ENCODE measurements at regions of chr16 and their contacts with region 1.

Region 1: GRCh38 chr16:31202414-31203375 is at the start of gene PYCARD:
- DNase-seq: peak; percentile 39
- H3K4me3 Mint-ChIP-seq: peak within 1 kb of the TSS; percentile 82
- H3K27ac Mint-ChIP-seq: peak within 1 kb of the TSS; percentile 77
- H3K4me1 Mint-ChIP-seq: peaks cover 46% of the 10 kb centered on the region
- H3K27me3 Mint-ChIP-seq: peaks cover 5% of the 10 kb centered on the region
- total RNA-seq, gene PYCARD: 15.1 and 15.3 TPM in 2 replicates

Region 2: GRCh38 chr16:31253642-31254045 is 50.9 kb after region 1 on chr16:
- intact Hi-C with region 1: loop called (anchors 1 kb)
- DNase-seq: peak; percentile 34
- H3K4me3 Mint-ChIP-seq: peak overlapping the region; percentile 72
- H3K27ac Mint-ChIP-seq: peak overlapping the region; percentile 93
- H3K4me1 Mint-ChIP-seq: peaks cover 42% of the 10 kb centered on the region
- H3K27me3 Mint-ChIP-seq: no peaks in the 10 kb centered on the region

Region 3: GRCh38 chr16:31265329-31266245 is 62.9 kb after region 1 on chr16:
- intact Hi-C with region 1: loop called (anchors 5 kb)
- DNase-seq: peak; percentile 40
- H3K4me3 Mint-ChIP-seq: peak overlapping the region; percentile 51
- H3K27ac Mint-ChIP-seq: peak overlapping the region; percentile 83
- H3K4me1 Mint-ChIP-seq: peaks cover 36% of the 10 kb centered on the region
- H3K27me3 Mint-ChIP-seq: no peaks in the 10 kb centered on the region

Region 4: GRCh38 chr16:31354394-31355291 is 151.9 kb after region 1 on chr16 and contains the start of gene ITGAX:
- intact Hi-C with region 1: loop called (anchors 10 kb)
- DNase-seq: peak; percentile 64
- H3K4me3 Mint-ChIP-seq: peak within 1 kb of the TSS; percentile 86
- H3K27ac Mint-ChIP-seq: peak within 1 kb of the TSS; percentile 97
- H3K4me1 Mint-ChIP-seq: peaks cover 62% of the 10 kb centered on the region
- H3K27me3 Mint-ChIP-seq: no peaks in the 10 kb centered on the region
- total RNA-seq, gene ITGAX: 56.2 and 56.9 TPM in 2 replicates

Region 5: DNA sequence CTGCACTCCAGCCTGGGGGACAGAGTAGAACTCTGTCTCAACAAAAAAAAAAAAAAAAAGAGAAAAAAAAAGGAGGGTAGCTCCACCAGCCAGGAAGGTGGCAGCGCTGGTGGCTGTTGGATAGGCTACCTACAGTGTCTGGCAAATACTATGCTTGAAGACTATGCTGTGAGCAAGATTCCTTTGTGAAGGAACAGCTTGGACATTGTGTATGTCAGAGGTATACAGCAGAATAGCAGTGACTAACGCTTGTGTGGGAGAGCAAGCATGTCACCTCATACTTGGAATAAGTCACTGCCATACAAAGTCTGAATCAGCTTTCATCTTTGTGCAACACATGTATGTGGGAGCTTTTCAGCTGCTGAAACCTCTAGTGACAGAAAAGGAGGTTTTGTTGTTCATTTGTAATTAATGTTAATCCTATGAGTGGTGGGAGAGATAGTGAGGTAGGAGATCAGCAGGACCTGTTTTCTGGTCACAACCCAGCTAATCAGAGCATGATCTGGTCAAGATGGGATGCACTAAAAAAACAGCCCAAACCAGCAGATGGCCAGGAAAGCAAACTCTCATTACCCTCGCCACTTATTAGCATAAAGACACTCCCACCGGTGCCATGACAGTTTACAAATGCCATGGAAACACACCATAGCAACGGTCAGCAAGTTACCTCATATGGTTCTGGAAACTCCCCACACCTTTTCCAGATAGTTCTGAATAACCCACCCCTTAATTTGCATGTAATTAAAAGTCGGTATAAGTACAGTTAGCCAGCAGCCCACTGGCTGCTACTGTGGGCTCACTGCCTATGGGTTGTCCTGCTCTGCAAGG is 183.7 kb after region 1 on chr16:
- intact Hi-C with region 1: loop called (anchors 5 kb)
- DNase-seq: no peak
- H3K4me3 Mint-ChIP-seq: no peak overlapping the region
- H3K27ac Mint-ChIP-seq: peak overlapping the region; percentile 38
- H3K4me1 Mint-ChIP-seq: peaks cover 37% of the 10 kb centered on the region
- H3K27me3 Mint-ChIP-seq: peaks cover 6% of the 10 kb centered on the region

Region 6: DNA sequence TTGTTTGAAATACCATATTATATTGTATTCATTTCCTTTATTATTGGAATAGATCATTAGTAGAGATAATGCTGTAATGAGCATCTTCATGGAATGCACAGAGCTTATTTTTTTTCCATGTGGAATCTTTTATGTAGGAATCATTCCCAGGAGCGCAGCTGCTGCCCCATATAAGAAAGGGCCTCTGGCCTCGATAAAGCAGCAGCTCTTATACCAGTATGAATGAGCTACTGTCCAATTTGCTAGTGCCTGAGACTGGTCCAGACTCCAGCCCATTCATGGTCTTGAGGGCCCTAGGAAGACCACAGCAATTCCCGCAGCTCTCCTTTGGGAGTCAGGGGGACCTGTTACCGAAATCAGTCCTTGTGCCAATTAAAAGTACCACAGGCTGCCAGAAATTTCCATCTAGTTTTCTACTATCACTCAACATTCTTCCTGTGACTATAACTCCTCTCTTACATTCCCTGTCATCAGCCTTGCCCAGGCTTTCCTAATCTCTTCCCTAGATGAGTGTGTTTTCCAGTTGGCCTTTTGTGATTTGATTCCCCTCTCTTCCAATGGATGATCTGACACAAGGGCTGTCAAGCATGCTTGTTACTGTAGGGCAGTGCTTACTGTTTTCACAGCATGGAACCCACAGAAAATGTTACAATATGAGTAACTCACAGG is 238.0 kb after region 1 on chr16:
- intact Hi-C with region 1: loop called (anchors 1 kb)
- DNase-seq: no peak
- H3K4me3 Mint-ChIP-seq: no peak overlapping the region
- H3K27ac Mint-ChIP-seq: no peak overlapping the region
- H3K4me1 Mint-ChIP-seq: peaks cover 25% of the 10 kb centered on the region
- H3K27me3 Mint-ChIP-seq: no peaks in the 10 kb centered on the region

Region 7: GRCh38 chr16:31868691-31869167 is 666.0 kb after region 1 on chr16:
- intact Hi-C with region 1: loop called (anchors 5 kb)
- DNase-seq: peak; percentile 73
- H3K4me3 Mint-ChIP-seq: peak overlapping the region; percentile 56
- H3K27ac Mint-ChIP-seq: peak overlapping the region; percentile 96
- H3K4me1 Mint-ChIP-seq: peaks cover 48% of the 10 kb centered on the region
- H3K27me3 Mint-ChIP-seq: peaks cover 5% of the 10 kb centered on the region